ENCODE measurements at regions of chr18 and their contacts with region 1.

Region 1: GRCh38 chr18:2431806-2432205 is 139.5 kb downstream of the METTL4 start:
- DNase-seq: no peak
- ATAC-seq: no peak
- H3K4me3 ChIP-seq: no peak overlapping the region
- H3K4me3 Mint-ChIP-seq: no peak overlapping the region
- H3K27ac ChIP-seq: no peak overlapping the region
- H3K27ac Mint-ChIP-seq: no peak overlapping the region
- H3K4me1 ChIP-seq: no peaks in the 10 kb centered on the region
- H3K4me1 Mint-ChIP-seq: no peaks in the 10 kb centered on the region
- H3K27me3 ChIP-seq: no peaks in the 10 kb centered on the region
- H3K27me3 Mint-ChIP-seq: peaks cover 8 to 18% (median 10%) of the 10 kb centered on the region in 5 donors

Region 2: GRCh38 chr18:2412996-2413751 is 18.6 kb before region 1 on chr18:
- CTCF ChIA-PET with region 1: no interaction called
- POLR2A ChIA-PET with region 1: no interaction called
- intact Hi-C with region 1: loop called in 1 of 2 experiments (anchors 1 kb)
- DNase-seq: no peak
- ATAC-seq: no peak
- H3K4me3 ChIP-seq: no peak overlapping the region
- H3K4me3 Mint-ChIP-seq: no peak overlapping the region
- H3K27ac ChIP-seq: no peak overlapping the region
- H3K27ac Mint-ChIP-seq: no peak overlapping the region
- H3K4me1 ChIP-seq: no peaks in the 10 kb centered on the region
- H3K4me1 Mint-ChIP-seq: no peaks in the 10 kb centered on the region
- H3K27me3 ChIP-seq: no peaks in the 10 kb centered on the region
- H3K27me3 Mint-ChIP-seq: peaks cover 4 to 41% (median 6%) of the 10 kb centered on the region in 5 donors

Region 3: DNA sequence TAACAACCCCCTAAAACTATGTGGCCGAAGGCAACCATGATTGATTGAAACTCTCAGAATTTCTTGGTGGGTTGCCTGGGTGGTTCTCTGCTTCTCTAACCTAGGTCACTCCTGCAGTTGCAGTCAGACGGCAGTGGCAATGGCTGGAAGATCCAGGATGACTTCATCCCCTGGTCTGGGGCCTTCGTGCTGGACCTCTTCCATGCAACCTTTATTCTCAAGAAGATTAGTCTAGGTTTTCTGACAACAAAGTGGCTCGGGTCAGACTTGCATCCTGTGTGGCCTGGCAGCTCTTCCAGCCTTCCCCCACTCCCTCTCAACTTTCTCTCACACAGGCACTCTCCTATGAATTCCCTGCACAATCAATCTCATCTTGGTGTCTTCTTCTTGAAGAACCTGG is 63.1 kb after region 1 on chr18:
- CTCF ChIA-PET with region 1: no interaction called
- POLR2A ChIA-PET with region 1: no interaction called
- intact Hi-C with region 1: loop called in 1 of 2 experiments (anchors 10 kb)
- DNase-seq: no peak
- ATAC-seq: no peak
- H3K4me3 ChIP-seq: no peak overlapping the region
- H3K4me3 Mint-ChIP-seq: no peak overlapping the region
- H3K27ac ChIP-seq: no peak overlapping the region
- H3K27ac Mint-ChIP-seq: no peak overlapping the region
- H3K4me1 ChIP-seq: no peaks in the 10 kb centered on the region
- H3K4me1 Mint-ChIP-seq: no peaks in the 10 kb centered on the region
- H3K27me3 ChIP-seq: no peaks in the 10 kb centered on the region
- H3K27me3 Mint-ChIP-seq: peaks cover 4 to 9% (median 5%) of the 10 kb centered on the region in 5 donors

Measured in naive thymus-derived CD4-positive, alpha-beta T cell (primary cell).